ENCODE measurements at regions of chr4 and their contacts with region 1.

Region 1: GRCh38 chr4:85968945-85969819 is 390.7 kb downstream of the MAPK10 start:
- DNase-seq: peak; percentile 81
- ATAC-seq: peak; percentile 96
- H3K4me3 ChIP-seq: no peak overlapping the region
- H3K27ac ChIP-seq: peak overlapping the region; percentile 54
- H3K4me1 ChIP-seq: peaks cover 23% of the 10 kb centered on the region
- H3K27me3 ChIP-seq: no peaks in the 10 kb centered on the region
- CTCF ChIP-seq: peak; percentile 74

Region 2: DNA sequence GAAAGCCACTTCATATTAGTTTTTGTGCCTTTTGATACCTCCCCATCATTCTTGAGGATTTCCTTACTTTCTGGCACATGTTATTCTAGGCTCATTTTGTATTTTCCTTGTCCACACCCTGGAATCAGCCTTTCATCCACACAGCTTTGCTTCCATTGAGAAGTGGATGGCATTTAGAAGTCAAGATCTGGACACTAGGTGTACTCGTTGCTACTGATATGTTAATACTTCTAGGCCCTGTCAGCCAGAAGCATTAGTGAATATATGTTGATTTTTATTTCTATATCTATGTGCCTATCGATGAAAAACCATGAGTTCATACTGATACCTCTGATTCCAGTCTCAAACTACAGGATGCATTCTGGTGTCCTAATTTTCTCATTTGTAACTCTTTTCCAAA is 421.1 kb before region 1 on chr4:
- CTCF ChIA-PET with region 1: no interaction called
- POLR2A ChIA-PET with region 1: no interaction called
- intact Hi-C with region 1: loop called (anchors 5 kb)
- DNase-seq: no peak
- ATAC-seq: peak; percentile 55; the same call in 1 of the 2 replicates
- H3K4me3 ChIP-seq: no peak overlapping the region
- H3K27ac ChIP-seq: no peak overlapping the region
- H3K4me1 ChIP-seq: no peaks in the 10 kb centered on the region
- H3K27me3 ChIP-seq: no peaks in the 10 kb centered on the region
- CTCF ChIP-seq: no peak

Region 3: GRCh38 chr4:85761803-85762528 is 207.2 kb before region 1 on chr4:
- CTCF ChIA-PET with region 1: no interaction called
- POLR2A ChIA-PET with region 1: no interaction called
- intact Hi-C with region 1: loop called (anchors 2 kb)
- DNase-seq: peak; percentile 24
- ATAC-seq: peak; percentile 72
- H3K4me3 ChIP-seq: peak overlapping the region; percentile 31; the same call in 1 of the 2 replicates
- H3K27ac ChIP-seq: peak overlapping the region; percentile 66
- H3K4me1 ChIP-seq: peaks cover 27% of the 10 kb centered on the region
- H3K27me3 ChIP-seq: no peaks in the 10 kb centered on the region
- CTCF ChIP-seq: no peak

Region 4: DNA sequence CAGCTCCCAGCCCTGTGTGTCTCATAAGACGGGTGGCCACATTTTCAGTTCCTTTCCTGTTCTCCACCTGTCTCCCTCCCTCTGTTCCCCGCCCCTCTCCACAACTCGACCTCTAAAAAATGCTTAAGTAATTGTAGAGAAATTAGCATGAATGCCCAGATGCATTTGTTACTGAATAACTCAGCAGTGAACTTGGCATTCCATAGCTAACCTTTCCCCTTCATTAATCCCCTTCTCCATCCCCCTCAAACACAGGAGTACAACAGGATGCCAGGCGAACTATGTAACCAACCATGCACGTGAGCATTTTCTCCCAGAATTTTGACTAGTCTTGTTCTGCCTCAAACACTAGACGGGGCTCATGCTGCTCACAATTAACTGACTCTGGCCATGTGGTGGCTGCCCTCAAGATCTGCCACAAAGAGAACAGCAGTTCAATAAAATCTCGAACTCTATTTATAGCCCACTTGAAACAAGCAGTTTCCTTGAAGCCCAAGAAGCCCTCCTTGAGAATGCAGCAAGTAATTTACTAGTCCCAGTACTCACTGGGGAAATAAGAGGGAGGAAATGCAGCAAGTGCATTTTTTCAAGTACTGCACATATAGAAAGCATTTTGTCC is 143.0 kb before region 1 on chr4:
- CTCF ChIA-PET with region 1: interaction called, 4 read pairs
- POLR2A ChIA-PET with region 1: no interaction called
- intact Hi-C with region 1: loop called (anchors 2 kb)
- DNase-seq: peak; percentile 26
- ATAC-seq: no peak; the same call in 1 of the 2 replicates
- H3K4me3 ChIP-seq: no peak overlapping the region
- H3K27ac ChIP-seq: peak overlapping the region; percentile 21; the same call in 1 of the 2 replicates
- H3K4me1 ChIP-seq: peaks cover 34% of the 10 kb centered on the region
- H3K27me3 ChIP-seq: no peaks in the 10 kb centered on the region
- CTCF ChIP-seq: peak; percentile 44

Region 5: GRCh38 chr4:85909851-85910250 is 59.3 kb before region 1 on chr4:
- CTCF ChIA-PET with region 1: no interaction called
- POLR2A ChIA-PET with region 1: no interaction called
- intact Hi-C with region 1: no loop called
- DNase-seq: no peak
- ATAC-seq: no peak
- H3K4me3 ChIP-seq: no peak overlapping the region
- H3K27ac ChIP-seq: no peak overlapping the region
- H3K4me1 ChIP-seq: no peaks in the 10 kb centered on the region
- H3K27me3 ChIP-seq: no peaks in the 10 kb centered on the region
- CTCF ChIP-seq: no peak

Region 6: DNA sequence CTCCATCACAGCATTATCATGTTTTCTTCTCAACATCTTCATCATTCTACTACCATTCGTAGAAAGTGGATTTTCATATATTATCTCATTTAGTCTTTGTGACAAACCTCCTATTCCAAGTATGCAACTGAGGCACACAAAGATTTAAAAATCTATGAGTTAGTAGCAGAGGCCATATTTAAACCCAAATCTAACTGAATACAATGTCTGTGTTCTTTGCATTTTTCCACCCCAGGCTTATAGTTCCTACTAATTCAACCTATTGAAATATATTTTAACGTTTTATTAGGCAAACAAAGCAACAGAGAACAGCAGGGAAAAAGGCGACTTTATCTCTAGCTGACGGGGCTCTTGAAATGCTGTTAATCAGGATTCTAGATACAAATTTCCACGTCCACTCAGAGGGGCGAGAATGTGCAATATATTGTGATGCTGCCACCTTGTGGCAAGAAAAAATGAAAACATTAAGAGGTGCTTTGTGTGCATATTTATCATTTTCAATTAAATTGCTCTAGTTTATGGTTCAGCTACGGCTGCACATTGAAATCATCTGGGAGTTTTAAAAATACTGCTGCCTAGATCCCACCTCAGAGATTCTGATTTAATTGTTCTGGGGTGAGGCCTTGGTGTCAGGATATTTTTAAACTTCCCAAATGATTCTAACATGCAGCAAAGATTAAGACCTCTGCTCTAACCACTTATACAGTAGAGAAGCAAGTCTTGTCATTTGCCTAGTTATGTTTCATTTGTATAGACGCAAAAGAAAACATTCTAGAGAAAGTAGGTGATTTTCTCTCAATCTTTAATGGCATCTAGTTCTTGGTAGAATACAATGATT is 74.8 kb after region 1 on chr4:
- CTCF ChIA-PET with region 1: no interaction called
- POLR2A ChIA-PET with region 1: no interaction called
- intact Hi-C with region 1: loop called (anchors 1 kb)
- DNase-seq: peak; percentile 72
- ATAC-seq: peak; percentile 76
- H3K4me3 ChIP-seq: peak overlapping the region; percentile 22; the same call in 1 of the 2 replicates
- H3K27ac ChIP-seq: no peak overlapping the region
- H3K4me1 ChIP-seq: peaks cover 11% of the 10 kb centered on the region
- H3K27me3 ChIP-seq: no peaks in the 10 kb centered on the region
- CTCF ChIP-seq: peak; percentile 71

Region 7: GRCh38 chr4:86640469-86640868 is 671.3 kb after region 1 on chr4:
- CTCF ChIA-PET with region 1: no interaction called
- POLR2A ChIA-PET with region 1: no interaction called
- intact Hi-C with region 1: no loop called
- DNase-seq: peak; percentile 28
- ATAC-seq: peak; percentile 66
- H3K4me3 ChIP-seq: no peak overlapping the region
- H3K27ac ChIP-seq: no peak overlapping the region
- H3K4me1 ChIP-seq: no peaks in the 10 kb centered on the region
- H3K27me3 ChIP-seq: no peaks in the 10 kb centered on the region
- CTCF ChIP-seq: no peak

Measured in PC-3 (cell line).